ENCODE measurements at regions of chr17 and their contacts with region 1.

Region 1: GRCh38 chr17:40014375-40014980 is 762 bp upstream of the CSF3 start:
- DNase-seq: no peak
- ATAC-seq: no peak
- H3K4me3 ChIP-seq: no peak overlapping the region
- H3K4me3 Mint-ChIP-seq: no peak overlapping the region
- H3K27ac ChIP-seq: no peak overlapping the region
- H3K27ac Mint-ChIP-seq: no peak overlapping the region
- H3K4me1 ChIP-seq: peaks cover 0 to 11% of the 10 kb centered on the region in 2 experiments
- H3K4me1 Mint-ChIP-seq: peaks cover 11 to 15% (median 12%) of the 10 kb centered on the region in 3 donors
- H3K27me3 ChIP-seq: peaks cover 0 to 4% of the 10 kb centered on the region in 2 experiments
- H3K27me3 Mint-ChIP-seq: peaks cover 0 to 3% of the 10 kb centered on the region in 2 donors

Region 2: DNA sequence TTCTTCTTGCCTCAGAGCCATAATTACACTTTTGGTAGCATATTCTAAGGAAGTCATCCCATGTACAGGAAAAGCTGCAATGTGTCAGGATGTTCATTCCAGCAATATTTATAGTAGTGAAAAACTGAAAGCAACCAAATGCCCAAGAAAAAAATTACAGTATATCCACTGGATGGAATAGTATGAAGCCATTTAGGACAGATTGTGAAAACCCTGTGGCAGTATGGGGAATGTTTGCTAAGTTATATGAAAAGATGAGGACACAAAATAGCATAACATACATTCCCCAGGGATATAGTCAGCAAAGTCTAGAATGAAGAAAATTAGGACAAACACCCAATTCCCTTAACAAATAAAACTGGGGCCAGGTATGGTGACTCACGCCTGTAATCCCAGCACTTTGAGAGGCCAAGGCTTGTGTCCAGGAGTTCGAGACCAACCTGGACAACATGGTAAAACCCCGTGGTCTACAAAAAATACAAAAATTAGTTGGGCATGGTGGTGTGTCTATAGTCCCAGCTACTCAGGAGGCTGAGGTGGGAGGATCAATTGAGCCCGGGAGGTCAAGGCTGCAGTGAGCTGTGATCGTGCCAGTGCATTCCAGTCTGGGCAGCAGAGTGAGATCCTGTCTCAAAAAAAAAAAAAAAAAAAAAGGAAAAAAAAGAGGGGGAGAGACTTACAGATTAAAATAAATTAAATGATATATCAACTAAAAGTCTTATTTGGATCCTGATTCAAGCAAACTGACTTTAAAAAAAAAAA is 84.7 kb before region 1 on chr17:
- CTCF ChIA-PET with region 1: no interaction called
- POLR2A ChIA-PET with region 1: interaction called in 1 of 2 experiments, 23 read pairs
- DNase-seq: no peak
- ATAC-seq: no peak
- H3K4me3 ChIP-seq: no peak overlapping the region
- H3K4me3 Mint-ChIP-seq: peak overlapping the region in 1 of 3 donors; percentile 12
- H3K27ac ChIP-seq: no peak overlapping the region
- H3K27ac Mint-ChIP-seq: no peak overlapping the region
- H3K4me1 ChIP-seq: peaks cover 11 to 28% of the 10 kb centered on the region in 2 experiments
- H3K4me1 Mint-ChIP-seq: peaks cover 26 to 33% (median 27%) of the 10 kb centered on the region in 3 donors
- H3K27me3 ChIP-seq: no peaks in the 10 kb centered on the region
- H3K27me3 Mint-ChIP-seq: no peaks in the 10 kb centered on the region

Region 3: GRCh38 chr17:40850323-40850972 is 836.0 kb after region 1 on chr17:
- CTCF ChIA-PET with region 1: no interaction called
- POLR2A ChIA-PET with region 1: no interaction called
- DNase-seq: no peak
- ATAC-seq: no peak
- H3K4me3 ChIP-seq: no peak overlapping the region
- H3K4me3 Mint-ChIP-seq: no peak overlapping the region
- H3K27ac ChIP-seq: no peak overlapping the region
- H3K27ac Mint-ChIP-seq: no peak overlapping the region
- H3K4me1 ChIP-seq: no peaks in the 10 kb centered on the region
- H3K4me1 Mint-ChIP-seq: peaks cover 0 to 2% (median 0%) of the 10 kb centered on the region in 3 donors
- H3K27me3 ChIP-seq: peaks cover 3 to 14% of the 10 kb centered on the region in 2 experiments
- H3K27me3 Mint-ChIP-seq: peaks cover 32 to 45% of the 10 kb centered on the region in 2 donors

Measured in T-cell (primary cell).